Spleen (tissue), 13 donors: ENCODE measurements at regions of chr11 and their contacts with region 1.

Region 1: DNA sequence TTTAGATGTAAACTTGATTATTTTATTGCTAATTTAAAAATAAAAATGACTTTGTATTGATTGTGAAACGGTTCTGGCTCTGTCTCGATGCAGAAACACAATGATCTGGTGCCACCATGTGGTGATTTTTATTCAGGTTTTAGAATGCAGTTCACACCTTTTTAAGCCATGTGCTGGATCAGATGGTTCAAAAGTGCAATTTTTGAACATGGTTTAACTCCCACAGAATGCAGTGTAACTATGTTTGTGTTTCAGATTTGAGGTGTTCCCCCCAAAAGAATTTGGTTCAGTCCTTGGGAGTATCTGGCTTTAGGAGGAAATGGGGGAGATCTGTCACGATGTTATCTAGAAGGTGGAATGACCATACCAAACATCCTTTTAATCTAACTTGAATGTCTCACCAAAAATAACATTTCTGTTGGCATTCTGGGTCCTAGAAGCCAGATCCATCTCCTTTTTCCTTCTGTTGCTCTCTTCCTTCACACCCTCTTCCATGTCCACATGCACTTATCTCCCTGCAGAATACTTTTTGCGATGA is 7.9 kb downstream of the MRPL16 start:
- DNase-seq: no peak
- H3K4me3 ChIP-seq: no peak overlapping the region
- H3K27ac ChIP-seq: peak overlapping the region in 1 of 8 donors; percentile 14
- H3K4me1 ChIP-seq: peaks cover 0 to 9% (median 3%) of the 10 kb centered on the region in 6 donors
- H3K27me3 ChIP-seq: no peaks in the 10 kb centered on the region
- CTCF ChIP-seq: peak; percentile 37 to 77 (median 55)
- POLR2A ChIP-seq: no peak

Region 2: DNA sequence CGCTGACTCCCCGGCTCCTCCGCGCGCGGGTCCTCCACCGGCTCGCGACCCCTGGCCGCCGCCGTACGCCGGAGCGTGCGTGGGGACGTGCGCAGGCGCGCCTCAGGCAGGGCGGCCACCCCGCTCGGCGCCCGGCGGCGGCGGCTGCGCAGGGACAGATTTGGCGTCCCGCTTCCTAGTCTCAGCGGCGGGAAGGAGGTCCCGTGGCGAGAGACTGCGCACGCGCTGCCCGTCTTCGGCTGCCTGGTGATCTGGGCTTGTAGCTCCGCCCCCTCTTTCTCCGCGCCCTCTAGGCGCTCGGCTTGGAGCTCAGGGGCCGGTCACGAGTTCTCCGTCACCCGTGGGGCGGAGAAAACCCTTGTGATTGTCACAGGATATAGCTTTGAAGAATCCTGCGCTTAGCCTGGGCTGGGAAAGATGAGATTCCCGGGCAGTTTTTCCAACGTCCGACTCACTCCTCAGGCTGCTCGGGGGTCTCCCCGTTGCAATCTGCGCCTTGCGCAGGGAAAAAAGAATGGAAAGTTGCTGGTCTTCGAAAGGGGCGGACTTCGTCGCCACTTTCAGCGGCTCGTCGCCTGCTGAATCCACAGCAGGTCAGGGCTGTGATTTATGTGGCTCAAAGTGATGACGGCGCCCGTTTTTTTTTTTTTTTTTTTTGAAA is 133.6 kb before region 1 on chr11 and contains the start of gene PATL1:
- intact Hi-C with region 1: loop called (anchors 10 kb)
- DNase-seq: peak; percentile 100
- H3K4me3 ChIP-seq: peak within 1 kb of the TSS; percentile 60 to 94 (median 75)
- H3K27ac ChIP-seq: peak within 1 kb of the TSS; percentile 87 to 99 (median 98)
- H3K4me1 ChIP-seq: peaks cover 18 to 57% (median 40%) of the 10 kb centered on the region in 6 donors
- H3K27me3 ChIP-seq: no peaks in the 10 kb centered on the region
- CTCF ChIP-seq: peak in 3 of 11 experiments; percentile 0 to 27 (median 9)
- POLR2A ChIP-seq: peak; percentile 53 to 80 (median 80)
- total RNA-seq, gene PATL1: 24.0 to 47.1 (median 35.5) TPM

Region 3: DNA sequence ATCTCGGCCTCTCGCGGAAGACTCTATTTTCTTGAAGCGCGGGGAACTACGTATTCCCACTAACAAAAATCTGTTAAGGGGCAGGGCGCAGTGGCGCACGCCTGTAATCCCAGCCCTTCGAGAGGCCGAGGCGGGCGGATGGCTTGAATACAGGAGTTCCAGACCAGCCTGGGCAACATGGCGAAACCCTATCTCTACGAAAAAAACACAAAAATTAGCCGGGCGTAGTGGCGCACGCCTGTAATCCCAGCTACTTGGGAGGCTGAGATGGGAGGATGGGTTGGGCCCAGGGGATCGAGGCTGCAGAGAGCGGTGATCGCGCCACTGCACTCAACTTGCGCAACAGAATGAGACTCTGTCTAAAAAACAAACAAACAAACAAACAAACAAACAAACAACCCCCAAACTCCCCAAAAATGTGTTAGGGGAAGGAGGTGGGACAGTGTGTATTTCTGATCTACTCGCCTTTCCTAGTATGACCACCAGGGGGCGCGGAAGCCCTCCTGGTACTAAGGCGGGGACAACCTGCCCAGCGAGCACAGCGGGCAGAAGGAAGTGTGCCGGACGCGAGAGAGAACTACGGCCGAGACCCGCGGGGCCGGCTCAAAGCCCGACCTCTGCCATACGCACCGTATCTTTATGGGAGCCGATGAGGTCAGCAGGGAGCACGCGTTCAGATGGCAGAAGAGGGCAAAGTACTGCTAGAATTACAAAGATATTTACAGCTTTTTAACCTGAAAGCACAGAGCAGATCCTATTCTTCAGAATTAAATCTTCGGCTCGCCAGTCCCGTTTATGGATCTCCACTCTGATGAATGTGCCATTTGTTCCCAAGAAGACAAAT is 48.8 kb before region 1 on chr11:
- intact Hi-C with region 1: loop called (anchors 2 kb)
- DNase-seq: peak; percentile 96
- H3K4me3 ChIP-seq: peak overlapping the region; percentile 67 to 93 (median 76)
- H3K27ac ChIP-seq: peak overlapping the region in 7 of 8 donors; percentile 85 to 98 (median 91)
- H3K4me1 ChIP-seq: peaks cover 3 to 47% (median 25%) of the 10 kb centered on the region in 6 donors
- H3K27me3 ChIP-seq: peaks cover 0 to 5% (median 0%) of the 10 kb centered on the region in 7 donors
- CTCF ChIP-seq: peak; percentile 82 to 95 (median 93)
- POLR2A ChIP-seq: no peak

Region 4: GRCh38 chr11:59901306-59901705 is 98.6 kb after region 1 on chr11:
- intact Hi-C with region 1: no loop called
- DNase-seq: no peak
- H3K4me3 ChIP-seq: no peak overlapping the region
- H3K27ac ChIP-seq: peak overlapping the region in 5 of 8 donors; percentile 29 to 55 (median 44)
- H3K4me1 ChIP-seq: no peaks in the 10 kb centered on the region
- H3K27me3 ChIP-seq: no peaks in the 10 kb centered on the region
- CTCF ChIP-seq: no peak
- POLR2A ChIP-seq: no peak